Activated CD8-positive, alpha-beta memory T cell treated with anti-CD3 and anti-CD28 coated beads, Interleukin-2, amount 10 ng/mL, durations not matched to agents 7 days and 5 days (primary cell): ENCODE measurements at regions of chr19 and their contacts with region 1.

Region 1: GRCh38 chr19:44723952-44724319 is 24.6 kb upstream of the BCL3 start:
- DNase-seq: peak; percentile 87
- ATAC-seq: peak; percentile 94
- H3K4me3 Mint-ChIP-seq: no peak overlapping the region
- H3K27ac Mint-ChIP-seq: peak overlapping the region; percentile 3
- H3K4me1 Mint-ChIP-seq: peaks cover 51% of the 10 kb centered on the region
- H3K27me3 Mint-ChIP-seq: peaks cover 7% of the 10 kb centered on the region

Region 2: GRCh38 chr19:44607049-44607448 is 116.9 kb before region 1 on chr19:
- CTCF ChIA-PET with region 1: no interaction called
- DNase-seq: no peak
- ATAC-seq: no peak
- H3K4me3 Mint-ChIP-seq: no peak overlapping the region
- H3K27ac Mint-ChIP-seq: no peak overlapping the region
- H3K4me1 Mint-ChIP-seq: peaks cover 4% of the 10 kb centered on the region
- H3K27me3 Mint-ChIP-seq: no peaks in the 10 kb centered on the region

Region 3: GRCh38 chr19:44689056-44689895 is 34.7 kb before region 1 on chr19:
- CTCF ChIA-PET with region 1: interaction called, 98 read pairs
- DNase-seq: peak; percentile 79
- ATAC-seq: peak; percentile 53
- H3K4me3 Mint-ChIP-seq: no peak overlapping the region
- H3K27ac Mint-ChIP-seq: no peak overlapping the region
- H3K4me1 Mint-ChIP-seq: peaks cover 31% of the 10 kb centered on the region
- H3K27me3 Mint-ChIP-seq: peaks cover 49% of the 10 kb centered on the region

Region 4: GRCh38 chr19:44741841-44742352 is 18.0 kb after region 1 on chr19:
- CTCF ChIA-PET with region 1: interaction called, 75 read pairs
- DNase-seq: no peak
- ATAC-seq: no peak
- H3K4me3 Mint-ChIP-seq: no peak overlapping the region
- H3K27ac Mint-ChIP-seq: peak overlapping the region; percentile 19
- H3K4me1 Mint-ChIP-seq: peaks cover 33% of the 10 kb centered on the region
- H3K27me3 Mint-ChIP-seq: peaks cover 3% of the 10 kb centered on the region

Region 5: DNA sequence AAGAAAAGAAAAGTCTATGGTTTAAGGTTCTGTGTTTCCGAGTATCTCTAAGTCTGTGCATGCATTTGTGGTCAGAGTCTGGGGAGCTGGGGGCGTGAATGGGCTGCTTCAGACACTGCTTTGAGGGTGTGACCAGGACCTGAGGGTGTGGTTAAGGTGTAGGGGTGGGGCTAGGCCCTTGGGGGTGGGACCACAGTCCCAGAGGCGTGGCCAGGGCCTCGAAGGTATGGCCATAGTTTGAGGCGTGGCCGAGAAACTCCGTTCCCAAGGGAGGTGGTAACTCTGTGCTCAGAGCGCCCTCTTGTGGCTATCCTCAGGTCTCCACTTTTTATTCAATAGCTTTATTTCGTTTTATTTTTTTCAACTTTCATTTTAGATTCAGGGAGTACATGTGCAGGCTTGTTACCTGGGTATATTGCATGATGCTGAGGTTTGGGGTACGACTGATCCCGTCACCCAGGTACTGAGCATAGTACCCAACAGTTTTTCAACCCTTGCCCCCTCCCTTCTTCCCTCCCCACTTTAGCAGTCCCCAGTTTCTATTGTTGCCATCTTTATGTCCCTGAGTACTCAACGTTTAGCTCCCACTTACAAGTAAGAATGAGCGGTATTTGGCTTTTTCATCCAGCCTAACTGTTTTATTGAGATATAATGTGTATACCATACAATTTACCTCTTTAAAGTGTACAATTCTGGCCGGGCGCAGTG is 46.8 kb after region 1 on chr19:
- CTCF ChIA-PET with region 1: interaction called, 406 read pairs
- DNase-seq: peak; percentile 99
- ATAC-seq: peak; percentile 100
- H3K4me3 Mint-ChIP-seq: peak overlapping the region; percentile 48
- H3K27ac Mint-ChIP-seq: peak overlapping the region; percentile 82
- H3K4me1 Mint-ChIP-seq: peaks cover 43% of the 10 kb centered on the region
- H3K27me3 Mint-ChIP-seq: peaks cover 11% of the 10 kb centered on the region

Region 6: GRCh38 chr19:44845612-44846454 is 121.9 kb after region 1 on chr19 and contains the start of gene NECTIN2:
- CTCF ChIA-PET with region 1: interaction called, 12 read pairs
- DNase-seq: peak; percentile 93
- ATAC-seq: peak; percentile 74
- H3K4me3 Mint-ChIP-seq: peak within 1 kb of the TSS; percentile 74
- H3K27ac Mint-ChIP-seq: peak within 1 kb of the TSS; percentile 55
- H3K4me1 Mint-ChIP-seq: peaks cover 21% of the 10 kb centered on the region
- H3K27me3 Mint-ChIP-seq: peaks cover 38% of the 10 kb centered on the region
- total RNA-seq, gene NECTIN2: 0.49 to 0.67 TPM

Region 7: GRCh38 chr19:45038931-45039893 is 315.3 kb after region 1 on chr19 and contains the start of gene CLASRP:
- CTCF ChIA-PET with region 1: no interaction called
- DNase-seq: peak; percentile 92
- ATAC-seq: peak; percentile 97
- H3K4me3 Mint-ChIP-seq: peak within 1 kb of the TSS; percentile 92
- H3K27ac Mint-ChIP-seq: peak within 1 kb of the TSS; percentile 93
- H3K4me1 Mint-ChIP-seq: peaks cover 28% of the 10 kb centered on the region
- H3K27me3 Mint-ChIP-seq: no peaks in the 10 kb centered on the region
- total RNA-seq, gene CLASRP: 114 to 121 TPM